ENCODE measurements at regions of chr15 and their contacts with region 1.

Region 1: DNA sequence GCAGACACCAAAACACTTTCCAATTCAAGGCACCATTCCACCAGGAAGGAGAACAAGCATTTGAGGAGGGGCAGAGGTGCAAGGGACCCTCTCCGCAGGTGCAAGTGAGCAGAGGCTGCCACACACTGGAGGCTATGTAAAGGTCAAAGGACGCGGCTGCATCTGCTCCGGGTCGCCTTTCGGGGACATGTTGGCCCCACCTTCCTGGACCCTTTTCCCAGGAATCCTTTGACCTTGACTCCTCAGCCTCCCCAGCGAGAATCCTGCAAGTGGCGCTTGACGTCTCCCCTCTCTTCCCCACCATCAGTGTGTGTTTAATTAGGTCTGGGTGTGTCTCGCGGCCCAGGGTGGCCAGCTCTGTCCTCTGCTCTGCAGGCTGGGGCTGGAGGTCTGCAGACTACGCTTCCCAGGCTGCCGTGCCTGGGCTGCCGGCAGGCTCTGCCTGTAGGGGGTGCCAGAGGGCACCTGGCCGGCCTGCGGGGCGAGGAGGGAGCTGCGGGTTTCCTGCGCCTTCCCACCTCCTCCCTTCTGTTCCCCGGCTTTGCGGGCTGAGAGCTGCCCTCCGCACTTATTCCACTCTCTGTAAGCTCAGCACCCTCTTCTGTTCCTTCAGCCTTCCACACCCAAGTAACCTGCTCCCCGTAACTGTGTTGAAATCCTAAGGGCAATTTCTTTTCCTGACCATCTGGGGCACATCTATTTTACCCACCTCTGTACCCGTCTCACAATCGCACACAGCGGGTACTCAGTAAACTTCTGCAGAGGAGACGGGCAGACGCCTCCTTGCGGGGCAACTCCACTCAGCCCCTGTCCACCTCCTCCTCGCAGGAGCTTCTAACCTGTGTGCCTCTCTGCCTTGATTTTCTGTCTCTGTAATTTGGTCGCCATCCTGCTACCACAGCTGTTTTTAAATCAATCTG is 129.8 kb downstream of the NSMCE3 start:
- DNase-seq: peak; percentile 24
- ATAC-seq: peak; percentile 88
- H3K4me3 ChIP-seq: no peak overlapping the region
- H3K27ac ChIP-seq: no peak overlapping the region
- H3K4me1 ChIP-seq: no peaks in the 10 kb centered on the region
- H3K27me3 ChIP-seq: peaks cover 13% of the 10 kb centered on the region; the same call in 1 of the 2 replicates
- CTCF ChIP-seq: peak; percentile 73
- POLR2A ChIP-seq: no peak
- RAD21 ChIP-seq: peak; percentile 71

Region 2: GRCh38 chr15:28896951-28897350 is 242.8 kb before region 1 on chr15:
- CTCF ChIA-PET with region 1: no interaction called
- POLR2A ChIA-PET with region 1: no interaction called
- dilution Hi-C with region 1: no loop called
- in situ Hi-C with region 1: no loop called
- intact Hi-C with region 1: no loop called
- DNase-seq: peak; percentile 95
- ATAC-seq: peak; percentile 85
- H3K4me3 ChIP-seq: no peak overlapping the region
- H3K27ac ChIP-seq: peak overlapping the region; percentile 75
- H3K4me1 ChIP-seq: peaks cover 10% of the 10 kb centered on the region
- H3K27me3 ChIP-seq: no peaks in the 10 kb centered on the region
- CTCF ChIP-seq: no peak
- POLR2A ChIP-seq: no peak
- RAD21 ChIP-seq: no peak

Region 3: GRCh38 chr15:29162411-29162810 is 22.6 kb after region 1 on chr15:
- CTCF ChIA-PET with region 1: interaction called, 12 read pairs
- POLR2A ChIA-PET with region 1: no interaction called
- dilution Hi-C with region 1: no loop called
- in situ Hi-C with region 1: no loop called
- intact Hi-C with region 1: no loop called
- DNase-seq: no peak
- ATAC-seq: no peak
- H3K4me3 ChIP-seq: no peak overlapping the region
- H3K27ac ChIP-seq: no peak overlapping the region
- H3K4me1 ChIP-seq: no peaks in the 10 kb centered on the region
- H3K27me3 ChIP-seq: no peaks in the 10 kb centered on the region
- CTCF ChIP-seq: no peak
- POLR2A ChIP-seq: no peak
- RAD21 ChIP-seq: no peak

Region 4: DNA sequence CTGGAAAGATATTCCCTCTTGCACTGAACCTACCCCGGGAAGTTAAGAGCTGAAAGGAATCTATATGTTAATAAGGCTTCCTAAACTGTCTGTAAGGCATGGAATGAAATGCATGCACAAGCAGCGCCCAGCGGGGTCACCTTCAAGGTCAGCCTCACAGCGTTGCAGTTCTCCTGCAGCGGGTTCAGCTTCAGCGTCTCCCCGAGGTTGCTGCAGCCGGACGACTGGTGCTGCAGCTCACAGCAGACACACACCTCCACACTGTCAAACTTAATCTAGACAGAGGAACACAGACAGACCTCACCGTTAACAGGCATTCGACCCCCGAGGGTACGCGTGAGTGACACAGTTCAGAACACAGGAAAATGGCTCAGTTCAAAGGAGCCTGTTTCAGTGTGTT is 56.5 kb after region 1 on chr15:
- CTCF ChIA-PET with region 1: interaction called, 4 read pairs
- POLR2A ChIA-PET with region 1: no interaction called
- dilution Hi-C with region 1: no loop called
- in situ Hi-C with region 1: loop called (anchors 10 kb)
- intact Hi-C with region 1: no loop called
- DNase-seq: no peak
- ATAC-seq: peak; percentile 14; the same call in 1 of the 2 replicates
- H3K4me3 ChIP-seq: no peak overlapping the region
- H3K27ac ChIP-seq: no peak overlapping the region
- H3K4me1 ChIP-seq: no peaks in the 10 kb centered on the region
- H3K27me3 ChIP-seq: peaks cover 6% of the 10 kb centered on the region
- CTCF ChIP-seq: no peak
- POLR2A ChIP-seq: no peak
- RAD21 ChIP-seq: no peak

Region 5: DNA sequence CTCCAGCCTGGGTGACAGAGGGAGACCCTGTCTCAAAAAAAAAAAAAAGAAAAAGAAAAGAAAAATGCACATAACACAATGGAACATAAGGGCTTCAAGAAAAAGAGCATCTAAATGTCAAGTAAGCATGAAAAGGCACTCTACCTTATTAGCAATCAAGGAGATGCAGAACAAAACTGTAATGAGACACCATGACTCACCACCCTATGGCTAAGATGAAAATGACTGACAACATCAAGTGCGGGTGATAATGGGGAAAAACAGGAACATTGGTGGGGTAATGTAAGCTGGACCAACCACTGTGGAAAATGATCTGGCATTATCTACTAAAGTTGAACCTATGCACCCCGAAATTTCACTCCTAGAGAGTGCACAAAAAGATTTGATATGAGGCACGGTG is 149.4 kb after region 1 on chr15:
- CTCF ChIA-PET with region 1: no interaction called
- POLR2A ChIA-PET with region 1: no interaction called
- dilution Hi-C with region 1: no loop called
- in situ Hi-C with region 1: no loop called
- intact Hi-C with region 1: no loop called
- DNase-seq: no peak
- ATAC-seq: no peak
- H3K4me3 ChIP-seq: no peak overlapping the region
- H3K27ac ChIP-seq: no peak overlapping the region
- H3K4me1 ChIP-seq: no peaks in the 10 kb centered on the region
- H3K27me3 ChIP-seq: peaks cover 10% of the 10 kb centered on the region
- CTCF ChIP-seq: no peak
- POLR2A ChIP-seq: no peak
- RAD21 ChIP-seq: no peak

Region 6: GRCh38 chr15:30065025-30065801 is 925.4 kb after region 1 on chr15:
- CTCF ChIA-PET with region 1: no interaction called
- POLR2A ChIA-PET with region 1: no interaction called
- dilution Hi-C with region 1: no loop called
- in situ Hi-C with region 1: loop called (anchors 25 kb)
- intact Hi-C with region 1: no loop called
- DNase-seq: peak; percentile 18
- ATAC-seq: peak; percentile 53
- H3K4me3 ChIP-seq: no peak overlapping the region
- H3K27ac ChIP-seq: no peak overlapping the region
- H3K4me1 ChIP-seq: peaks cover 1% of the 10 kb centered on the region; the same call in 1 of the 2 replicates
- H3K27me3 ChIP-seq: peaks cover 3% of the 10 kb centered on the region
- CTCF ChIP-seq: no peak
- POLR2A ChIP-seq: no peak
- RAD21 ChIP-seq: no peak